ENCODE measurements at regions of chr18 and their contacts with region 1.

Region 1: DNA sequence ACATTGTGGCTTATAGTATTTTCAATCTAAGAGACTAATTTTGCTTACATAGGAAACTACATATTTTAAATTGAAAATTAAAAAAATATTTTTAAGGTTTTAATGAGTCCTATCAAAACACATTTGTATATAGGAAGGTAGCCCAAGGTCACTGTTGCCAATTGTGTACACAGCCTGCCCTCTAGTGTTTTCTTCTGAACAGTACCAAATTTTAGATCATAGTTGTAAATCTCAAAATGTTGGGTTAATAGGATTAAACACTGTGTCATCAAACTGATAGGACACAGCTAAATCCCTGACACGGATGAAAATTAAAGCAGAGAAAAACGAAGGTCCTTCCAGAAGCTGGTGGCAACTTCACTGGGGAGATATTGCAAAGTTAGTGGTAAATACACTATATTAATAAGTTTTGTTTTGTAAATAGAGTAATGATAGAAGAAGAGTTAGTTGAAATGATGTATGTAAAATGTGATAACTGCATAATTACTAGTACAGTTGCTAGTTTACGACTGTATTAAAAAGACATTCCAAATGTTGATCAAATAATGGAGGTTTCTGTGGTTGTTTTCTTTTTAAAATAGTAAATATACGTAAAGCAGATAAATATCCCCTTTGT is 19.7 kb downstream of the CLUL1 start:
- DNase-seq: no peak
- H3K4me3 ChIP-seq: no peak overlapping the region
- H3K27ac ChIP-seq: no peak overlapping the region
- H3K4me1 ChIP-seq: no peaks in the 10 kb centered on the region
- H3K27me3 ChIP-seq: no peaks in the 10 kb centered on the region
- CTCF ChIP-seq: peak; percentile 56 to 62 (median 59)
- EP300 ChIP-seq: no peak
- POLR2A ChIP-seq: no peak

Region 2: GRCh38 chr18:275486-275885 is 341.0 kb before region 1 on chr18:
- in situ Hi-C with region 1: loop called in 1 of 4 experiments (anchors 10 kb)
- intact Hi-C with region 1: no loop called
- DNase-seq: no peak
- H3K4me3 ChIP-seq: no peak overlapping the region
- H3K27ac ChIP-seq: no peak overlapping the region
- H3K4me1 ChIP-seq: no peaks in the 10 kb centered on the region
- H3K27me3 ChIP-seq: no peaks in the 10 kb centered on the region
- CTCF ChIP-seq: no peak
- EP300 ChIP-seq: no peak
- POLR2A ChIP-seq: no peak

Region 3: GRCh38 chr18:286515-287310 is 329.8 kb before region 1 on chr18:
- in situ Hi-C with region 1: loop called in 2 of 4 experiments (anchors 5 to 10 kb)
- intact Hi-C with region 1: loop called (anchors 2 kb)
- DNase-seq: no peak
- H3K4me3 ChIP-seq: no peak overlapping the region
- H3K27ac ChIP-seq: no peak overlapping the region
- H3K4me1 ChIP-seq: no peaks in the 10 kb centered on the region
- H3K27me3 ChIP-seq: no peaks in the 10 kb centered on the region
- CTCF ChIP-seq: peak; percentile 27 to 50 (median 35)
- EP300 ChIP-seq: no peak
- POLR2A ChIP-seq: no peak

Region 4: GRCh38 chr18:293536-293935 is 323.0 kb before region 1 on chr18:
- in situ Hi-C with region 1: loop called in 2 of 4 experiments (anchors 5 to 10 kb)
- intact Hi-C with region 1: no loop called
- DNase-seq: no peak
- H3K4me3 ChIP-seq: no peak overlapping the region
- H3K27ac ChIP-seq: no peak overlapping the region
- H3K4me1 ChIP-seq: no peaks in the 10 kb centered on the region
- H3K27me3 ChIP-seq: no peaks in the 10 kb centered on the region
- CTCF ChIP-seq: no peak
- EP300 ChIP-seq: no peak
- POLR2A ChIP-seq: no peak

Measured in transverse colon (tissue), 4 donors.